ENCODE measurements at regions of chr6 and their contacts with region 1.

Region 1: GRCh38 chr6:28683944-28684538 is 158.4 kb downstream of the GPX5 start:
- ATAC-seq: peak; percentile 38 to 89 (median 54)
- H3K4me3 ChIP-seq: peak overlapping the region in 1 of 5 donors; percentile 4
- H3K27ac ChIP-seq: no peak overlapping the region
- H3K4me1 ChIP-seq: no peaks in the 10 kb centered on the region

Region 2: GRCh38 chr6:28371706-28372451 is 312.2 kb before region 1 on chr6:
- in situ Hi-C with region 1: no loop called
- ATAC-seq: no peak
- H3K4me3 ChIP-seq: no peak overlapping the region
- H3K27ac ChIP-seq: no peak overlapping the region
- H3K4me1 ChIP-seq: no peaks in the 10 kb centered on the region

Region 3: DNA sequence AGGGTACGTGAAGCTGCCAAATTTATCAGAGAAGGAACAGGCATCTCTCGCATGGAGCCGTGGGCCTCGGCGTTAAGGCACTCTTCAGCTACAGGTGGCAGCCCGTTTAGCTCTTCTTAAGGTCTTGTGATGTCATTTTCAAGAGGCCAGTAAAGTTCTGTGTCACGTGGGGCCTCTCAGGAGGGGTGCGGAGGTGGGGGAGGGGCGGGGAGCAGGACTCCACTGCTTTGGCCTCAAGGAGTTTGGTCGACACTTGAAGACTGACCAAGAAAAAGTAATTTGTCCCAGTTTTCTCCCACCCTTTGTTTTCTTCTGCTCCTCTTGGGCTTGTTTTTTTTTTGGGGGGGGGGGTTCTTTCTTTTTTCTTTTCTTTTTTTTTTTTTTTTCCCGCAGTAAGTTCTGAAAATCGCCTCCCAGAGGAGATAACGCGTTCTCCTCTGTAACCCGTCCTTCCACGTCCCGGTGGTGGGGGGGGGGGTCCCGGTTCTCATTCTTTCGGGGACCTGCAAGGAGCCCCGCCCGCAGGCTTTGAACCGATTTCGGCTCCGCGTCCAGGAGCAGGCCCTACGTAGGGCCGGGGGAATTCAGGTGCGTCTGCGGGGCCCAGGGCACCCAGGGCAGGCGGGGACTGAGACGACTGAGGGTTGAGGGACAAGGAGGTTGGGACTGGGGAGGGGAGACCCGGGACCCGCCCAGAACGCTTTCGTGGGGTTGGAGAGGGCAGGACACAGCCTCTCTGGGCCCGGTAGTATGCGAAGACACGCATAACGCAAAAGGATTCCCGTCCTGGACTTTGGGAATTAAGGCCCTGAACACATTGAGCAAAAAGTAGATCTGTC is 194.5 kb before region 1 on chr6:
- in situ Hi-C with region 1: loop called in 2 of 9 experiments (anchors 25 kb)
- ATAC-seq: peak; percentile 38 to 88 (median 76)
- H3K4me3 ChIP-seq: peak overlapping the region in 4 of 5 donors; percentile 15 to 62 (median 35)
- H3K27ac ChIP-seq: peak overlapping the region in 1 of 2 donors; percentile 40
- H3K4me1 ChIP-seq: no peaks in the 10 kb centered on the region

Region 4: DNA sequence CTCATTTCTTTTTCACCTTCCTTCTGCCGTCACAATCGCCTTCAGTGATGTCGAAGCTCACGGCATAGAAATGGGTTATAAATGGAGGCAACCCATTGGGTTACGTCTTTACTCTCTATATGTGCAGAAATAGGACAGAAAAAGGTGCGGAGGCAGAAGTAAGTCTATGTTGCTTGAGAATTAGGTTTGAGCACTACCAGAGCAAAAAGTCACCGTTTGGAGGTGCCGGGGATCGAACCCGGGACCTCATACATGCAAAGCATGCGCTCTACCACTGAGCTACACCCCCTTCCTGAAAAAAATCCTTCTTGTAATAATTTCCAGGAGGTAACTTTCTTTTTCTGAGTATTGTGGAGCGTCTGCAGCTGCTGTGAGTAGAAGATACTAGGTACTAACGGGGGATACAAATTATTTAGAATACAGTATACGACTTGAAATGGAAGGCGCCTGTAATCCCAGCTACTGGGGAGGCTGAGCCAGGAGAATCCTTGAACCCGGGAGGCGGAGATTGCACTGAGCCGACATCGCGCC is 105.6 kb after region 1 on chr6:
- in situ Hi-C with region 1: no loop called
- ATAC-seq: peak in 6 of 8 experiments; percentile 48 to 77 (median 66)
- H3K4me3 ChIP-seq: peak overlapping the region; percentile 7 to 48 (median 28)
- H3K27ac ChIP-seq: no peak overlapping the region
- H3K4me1 ChIP-seq: no peaks in the 10 kb centered on the region

Region 5: GRCh38 chr6:28969129-28969528 is 285.1 kb after region 1 on chr6:
- in situ Hi-C with region 1: no loop called
- ATAC-seq: no peak
- H3K4me3 ChIP-seq: no peak overlapping the region
- H3K27ac ChIP-seq: no peak overlapping the region
- H3K4me1 ChIP-seq: no peaks in the 10 kb centered on the region

Region 6: DNA sequence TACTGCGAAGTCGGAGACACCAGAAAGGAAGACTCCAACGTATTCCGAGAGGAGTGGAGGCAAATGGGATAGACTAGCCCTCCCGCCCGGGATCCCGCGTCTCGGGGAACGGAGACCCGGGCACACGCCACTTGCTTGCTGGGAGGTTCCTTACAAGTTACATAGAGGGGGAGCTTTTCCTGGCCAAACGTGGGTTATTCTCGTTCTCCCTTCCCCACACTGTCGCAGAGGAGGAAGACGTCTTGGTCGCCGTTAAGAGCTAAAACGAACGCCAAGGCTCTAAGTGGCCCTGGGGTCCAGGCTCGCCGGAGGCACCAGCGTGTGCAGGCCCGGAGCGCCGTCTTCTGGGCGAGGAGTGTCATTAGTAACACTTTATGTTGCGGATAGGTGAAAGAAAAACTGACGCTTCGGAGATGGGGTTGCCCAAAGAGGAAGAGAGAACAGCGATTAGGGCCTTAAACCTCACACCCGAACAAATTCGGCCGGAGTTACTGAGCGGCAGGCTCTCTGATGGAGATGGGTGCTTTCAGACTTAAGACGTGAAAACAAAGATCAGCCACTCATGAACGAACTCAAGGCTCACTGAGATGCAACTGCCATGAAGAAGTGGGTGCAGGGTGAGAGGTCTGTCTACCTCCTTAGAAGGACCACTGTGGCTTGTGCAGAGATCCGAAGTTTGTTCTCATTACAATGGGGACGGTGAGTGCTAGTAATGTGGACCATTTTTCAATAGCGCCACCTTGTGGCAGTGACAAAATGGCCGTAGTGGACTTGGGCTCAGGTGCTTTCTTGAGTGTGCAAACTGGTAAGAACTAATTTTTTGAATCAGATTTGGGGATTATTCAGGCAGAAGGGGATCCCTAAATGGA is 332.8 kb after region 1 on chr6:
- in situ Hi-C with region 1: loop called in 5 of 9 experiments (anchors 10 to 25 kb)
- ATAC-seq: peak; percentile 91 to 97 (median 95)
- H3K4me3 ChIP-seq: peak overlapping the region; percentile 35 to 60 (median 41)
- H3K27ac ChIP-seq: no peak overlapping the region
- H3K4me1 ChIP-seq: no peaks in the 10 kb centered on the region

Region 7: GRCh38 chr6:29035951-29036350 is 351.9 kb after region 1 on chr6:
- in situ Hi-C with region 1: loop called in 1 of 9 experiments (anchors 25 kb)
- ATAC-seq: no peak
- H3K4me3 ChIP-seq: no peak overlapping the region
- H3K27ac ChIP-seq: no peak overlapping the region
- H3K4me1 ChIP-seq: no peaks in the 10 kb centered on the region

Region 8: DNA sequence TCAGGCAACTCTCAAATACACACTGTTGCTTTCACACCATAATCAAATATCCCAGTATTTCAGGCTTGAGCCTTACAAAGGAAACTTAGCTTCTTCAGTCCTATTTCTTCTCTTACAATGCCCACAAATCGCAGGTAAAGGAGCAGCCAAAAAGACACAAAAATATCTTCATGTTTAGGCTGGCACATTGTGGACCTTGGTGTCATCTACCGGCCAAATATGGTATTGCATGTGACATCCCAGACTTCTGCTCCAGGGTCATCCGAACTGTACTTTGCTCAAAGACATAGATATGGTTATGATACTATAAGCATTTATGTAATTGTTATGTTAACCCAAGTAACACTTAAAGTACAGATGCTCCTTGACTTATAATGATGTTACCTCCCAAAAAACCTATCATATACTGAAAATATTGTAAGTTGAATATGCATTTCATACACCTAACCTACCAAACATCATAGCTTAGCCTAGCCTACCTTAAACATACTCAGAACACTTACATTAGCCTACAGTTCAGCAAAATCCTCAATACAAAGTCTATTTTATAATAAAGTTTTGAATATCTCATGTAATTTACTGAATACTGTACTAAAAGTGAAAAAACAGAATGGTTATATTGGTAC is 905.5 kb after region 1 on chr6:
- in situ Hi-C with region 1: loop called in 1 of 9 experiments (anchors 25 kb)
- ATAC-seq: peak in 4 of 8 experiments; percentile 64 to 69 (median 65)
- H3K4me3 ChIP-seq: no peak overlapping the region
- H3K27ac ChIP-seq: no peak overlapping the region
- H3K4me1 ChIP-seq: no peaks in the 10 kb centered on the region